Vagina (tissue), 2 donors: ENCODE measurements at regions of chr17 and their contacts with region 1.

Region 1: GRCh38 chr17:64326395-64327054 is 63.5 kb upstream of the TEX2 start:
- DNase-seq: peak in 1 of 2 donors; percentile 96
- H3K4me3 ChIP-seq: no peak overlapping the region
- H3K27ac ChIP-seq: peak overlapping the region; percentile 68
- H3K4me1 ChIP-seq: peaks cover 42% of the 10 kb centered on the region
- H3K27me3 ChIP-seq: no peaks in the 10 kb centered on the region
- CTCF ChIP-seq: no peak
- POLR2A ChIP-seq: no peak

Region 2: GRCh38 chr17:64355536-64356303 is 29.2 kb after region 1 on chr17:
- intact Hi-C with region 1: loop called (anchors 2 kb)
- DNase-seq: peak in 1 of 2 donors; percentile 86
- H3K4me3 ChIP-seq: no peak overlapping the region
- H3K27ac ChIP-seq: peak overlapping the region; percentile 56
- H3K4me1 ChIP-seq: peaks cover 14% of the 10 kb centered on the region
- H3K27me3 ChIP-seq: no peaks in the 10 kb centered on the region
- CTCF ChIP-seq: no peak
- POLR2A ChIP-seq: no peak

Region 3: GRCh38 chr17:64470625-64471024 is 144.1 kb after region 1 on chr17:
- intact Hi-C with region 1: no loop called
- DNase-seq: no peak
- H3K4me3 ChIP-seq: no peak overlapping the region
- H3K27ac ChIP-seq: no peak overlapping the region
- H3K4me1 ChIP-seq: no peaks in the 10 kb centered on the region
- H3K27me3 ChIP-seq: no peaks in the 10 kb centered on the region
- CTCF ChIP-seq: no peak
- POLR2A ChIP-seq: no peak